ENCODE measurements at regions of chr10 and their contacts with region 1.

Region 1: DNA sequence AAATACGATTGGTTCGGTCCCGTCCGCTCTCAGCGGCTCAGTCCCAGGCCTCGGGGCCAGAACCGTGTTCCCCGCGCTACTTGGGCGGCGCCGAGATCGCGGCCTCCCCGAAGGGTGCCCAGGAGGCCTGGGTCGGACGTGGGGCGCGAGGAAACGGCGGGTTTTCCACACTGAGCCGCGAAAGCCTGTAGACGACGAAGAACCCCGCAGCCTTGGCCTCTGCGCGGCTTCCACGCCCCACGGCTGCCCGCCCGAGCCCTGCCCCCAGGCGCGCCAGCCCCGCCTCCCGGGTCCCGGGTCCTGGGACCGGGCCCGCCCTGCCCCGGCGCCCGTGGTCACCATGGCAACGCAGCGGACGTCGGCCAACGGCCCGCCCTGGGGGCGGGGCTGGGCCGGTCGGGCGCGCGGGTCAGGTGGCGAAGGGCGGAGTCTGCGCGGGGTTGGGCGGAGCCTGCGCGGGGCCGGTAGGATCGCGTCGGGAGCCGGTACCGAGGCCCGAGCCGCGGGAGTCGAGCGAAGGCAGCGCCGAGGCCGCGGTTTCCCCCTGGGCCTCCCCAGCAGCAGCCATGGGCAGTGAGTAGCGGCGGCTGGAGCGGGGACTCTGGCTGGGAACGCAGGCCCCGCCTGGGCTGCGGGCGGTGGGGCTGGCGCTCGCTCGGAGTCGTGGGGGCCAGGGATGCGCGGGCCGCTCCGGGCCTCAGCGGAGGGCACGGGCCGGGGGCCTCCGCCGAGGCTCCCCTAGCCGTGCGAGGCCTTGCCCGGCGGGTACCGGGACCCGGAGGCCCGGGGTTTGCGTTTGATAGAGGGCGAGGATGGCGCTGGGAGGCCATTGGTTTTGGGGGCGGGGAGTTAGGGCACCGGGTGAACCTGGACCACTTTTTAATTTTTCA is at the start of gene SEC61A2:
- DNase-seq: peak; percentile 99
- ATAC-seq: peak; percentile 96
- H3K4me3 Mint-ChIP-seq: peak within 1 kb of the TSS; percentile 81
- H3K27ac Mint-ChIP-seq: peak within 1 kb of the TSS; percentile 76
- H3K4me1 Mint-ChIP-seq: peaks cover 19% of the 10 kb centered on the region
- H3K27me3 Mint-ChIP-seq: no peaks in the 10 kb centered on the region
- total RNA-seq, gene SEC61A2: 11.3 to 12.0 TPM

Region 2: GRCh38 chr10:12113627-12114026 is 15.8 kb before region 1 on chr10:
- CTCF ChIA-PET with region 1: no interaction called
- POLR2A ChIA-PET with region 1: no interaction called
- intact Hi-C with region 1: loop called (anchors 1 to 2 kb)
- DNase-seq: no peak
- ATAC-seq: no peak
- H3K4me3 Mint-ChIP-seq: no peak overlapping the region
- H3K27ac Mint-ChIP-seq: peak overlapping the region; percentile 64
- H3K4me1 Mint-ChIP-seq: peaks cover 33% of the 10 kb centered on the region
- H3K27me3 Mint-ChIP-seq: no peaks in the 10 kb centered on the region